CD4-positive, alpha-beta memory T cell (primary cell): ENCODE measurements at regions of chr12 and their contacts with region 1.

Region 1: DNA sequence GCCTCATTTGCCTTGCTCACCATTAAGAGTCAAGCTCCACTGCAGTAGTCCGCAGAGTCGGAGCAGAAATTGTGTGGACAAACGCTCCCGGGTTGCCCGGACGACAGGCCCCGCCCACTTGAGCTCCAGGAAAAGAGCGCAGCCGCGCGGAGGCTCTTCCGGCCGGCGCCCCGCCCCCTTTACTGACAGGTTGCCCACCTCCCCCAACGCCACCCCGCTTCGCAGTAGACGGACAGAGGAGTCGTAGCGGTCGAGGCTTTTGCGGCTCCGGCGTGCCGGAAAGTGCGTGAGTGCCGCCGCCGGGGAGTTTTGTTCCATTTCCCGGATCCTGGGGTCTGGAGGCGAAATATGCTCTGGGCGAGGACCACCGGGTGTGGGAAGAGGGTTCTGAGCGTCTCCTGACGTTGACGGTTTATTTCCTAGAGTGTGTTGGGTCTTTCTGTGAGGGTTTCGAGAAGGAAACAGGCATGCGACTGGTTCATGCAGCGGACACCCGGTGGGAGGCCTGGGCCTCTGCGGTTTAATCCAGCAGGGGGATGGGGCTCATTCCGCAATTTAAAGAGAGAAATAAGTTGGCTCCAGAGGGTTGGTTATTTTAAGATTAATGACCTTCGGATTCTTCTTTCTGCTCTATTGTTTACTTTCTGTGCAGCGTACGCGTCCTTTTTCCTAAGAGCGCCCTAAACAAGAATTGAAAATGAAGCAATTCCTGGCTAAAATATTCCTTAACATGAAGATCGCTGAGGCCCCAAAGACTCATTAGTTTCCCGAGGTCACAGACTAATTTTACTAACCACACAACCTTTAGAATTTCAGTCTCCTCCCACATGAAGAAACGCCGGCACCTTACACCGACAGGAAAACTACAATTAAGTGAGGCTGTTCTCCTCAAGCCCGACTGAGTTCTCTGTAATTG is at the starts of genes DNAI7 and ETFRF1:
- DNase-seq: peak; percentile 93 to 97 (median 95)
- H3K4me3 ChIP-seq: peak within 1 kb of the TSS; percentile 73 to 98
- H3K4me3 Mint-ChIP-seq: peak within 1 kb of the TSS; percentile 96 to 99 (median 99)
- H3K27ac ChIP-seq: peak within 1 kb of the TSS; percentile 83
- H3K27ac Mint-ChIP-seq: peak within 1 kb of the TSS; percentile 97 to 100 (median 99)
- H3K4me1 ChIP-seq: peaks cover 24% of the 10 kb centered on the region
- H3K4me1 Mint-ChIP-seq: peaks cover 16 to 35% (median 25%) of the 10 kb centered on the region in 4 donors
- H3K27me3 ChIP-seq: no peaks in the 10 kb centered on the region
- H3K27me3 Mint-ChIP-seq: no peaks in the 10 kb centered on the region
- total RNA-seq, gene DNAI7: 0.15 TPM in 1 of 2 experiments, not detected in the other
- total RNA-seq, gene ETFRF1: 22.1 to 23.0 TPM

Region 2: DNA sequence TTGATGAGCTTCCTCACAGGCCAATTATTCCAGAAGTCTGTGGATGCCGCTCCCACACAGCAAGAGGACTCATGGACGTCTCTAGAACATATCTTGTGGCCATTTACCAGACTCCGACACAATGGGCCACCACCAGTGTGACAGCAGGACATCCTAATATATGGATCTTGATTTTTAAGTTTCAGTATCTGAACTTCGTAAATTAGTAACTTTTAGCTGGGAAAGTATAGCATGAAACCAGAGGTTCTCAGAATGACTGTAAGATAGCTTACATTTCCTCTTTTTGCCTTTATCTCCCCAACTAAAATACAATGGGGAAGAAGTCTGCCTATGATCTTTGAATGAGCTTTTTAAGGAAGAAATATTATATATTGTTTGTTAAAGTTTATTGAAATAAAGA is 87.4 kb before region 1 on chr12:
- CTCF ChIA-PET with region 1: no interaction called
- POLR2A ChIA-PET with region 1: no interaction called
- intact Hi-C with region 1: no loop called
- DNase-seq: no peak
- H3K4me3 ChIP-seq: no peak overlapping the region
- H3K4me3 Mint-ChIP-seq: no peak overlapping the region
- H3K27ac ChIP-seq: no peak overlapping the region
- H3K27ac Mint-ChIP-seq: peak overlapping the region in 3 of 7 donors; percentile 12 to 67 (median 25)
- H3K4me1 ChIP-seq: no peaks in the 10 kb centered on the region
- H3K4me1 Mint-ChIP-seq: no peaks in the 10 kb centered on the region
- H3K27me3 ChIP-seq: no peaks in the 10 kb centered on the region
- H3K27me3 Mint-ChIP-seq: no peaks in the 10 kb centered on the region

Region 3: DNA sequence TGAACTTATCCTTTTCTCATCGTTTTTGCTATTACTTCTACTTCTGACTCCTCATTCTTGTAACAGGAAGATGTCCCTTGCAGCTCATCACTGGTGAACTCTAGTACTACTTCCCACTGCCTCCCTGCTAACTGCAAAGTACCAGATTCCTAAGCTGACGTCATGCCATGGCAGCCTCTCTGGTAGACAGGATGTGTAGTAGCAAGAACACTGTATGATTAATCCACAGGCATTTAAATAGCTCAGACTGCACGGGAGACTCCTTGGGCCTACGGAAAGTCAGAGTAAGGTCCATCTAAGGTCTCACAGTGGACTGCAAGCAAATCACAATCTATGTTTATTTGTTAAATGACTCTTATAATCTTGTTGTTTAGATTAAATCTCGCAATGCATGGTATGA is 43.8 kb before region 1 on chr12:
- CTCF ChIA-PET with region 1: interaction called, 11 read pairs
- POLR2A ChIA-PET with region 1: interaction called, 7 read pairs
- intact Hi-C with region 1: loop called (anchors 1 kb)
- DNase-seq: no peak
- H3K4me3 ChIP-seq: no peak overlapping the region
- H3K4me3 Mint-ChIP-seq: no peak overlapping the region
- H3K27ac ChIP-seq: no peak overlapping the region
- H3K27ac Mint-ChIP-seq: peak overlapping the region in 1 of 7 donors; percentile 5
- H3K4me1 ChIP-seq: peaks cover 3% of the 10 kb centered on the region
- H3K4me1 Mint-ChIP-seq: peaks cover 0 to 8% (median 6%) of the 10 kb centered on the region in 4 donors
- H3K27me3 ChIP-seq: no peaks in the 10 kb centered on the region
- H3K27me3 Mint-ChIP-seq: no peaks in the 10 kb centered on the region

Region 4: DNA sequence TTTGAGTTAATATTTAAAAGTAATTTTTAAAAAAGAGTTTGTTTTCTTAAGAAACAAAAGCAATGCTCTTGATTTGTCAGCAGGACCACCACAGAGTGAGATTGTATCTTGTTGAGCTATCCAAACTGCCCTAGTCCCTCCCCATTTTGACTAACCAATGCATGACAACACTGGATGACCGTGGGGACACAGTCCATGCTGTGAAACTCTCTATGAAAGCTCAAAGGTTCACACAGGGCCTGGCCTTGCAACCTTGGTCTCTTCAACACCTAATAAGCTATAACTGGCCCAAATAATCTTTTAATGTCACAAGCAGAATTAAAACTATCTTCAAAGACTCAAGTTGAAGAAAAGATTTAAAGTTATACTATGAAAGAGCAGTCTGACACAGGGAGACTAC is 13.2 kb after region 1 on chr12:
- CTCF ChIA-PET with region 1: interaction called, 3 read pairs
- POLR2A ChIA-PET with region 1: interaction called, 9 read pairs
- intact Hi-C with region 1: loop called (anchors 2 kb)
- DNase-seq: no peak
- H3K4me3 ChIP-seq: no peak overlapping the region
- H3K4me3 Mint-ChIP-seq: no peak overlapping the region
- H3K27ac ChIP-seq: no peak overlapping the region
- H3K27ac Mint-ChIP-seq: peak overlapping the region in 3 of 7 donors; percentile 37 to 88 (median 50)
- H3K4me1 ChIP-seq: no peaks in the 10 kb centered on the region
- H3K4me1 Mint-ChIP-seq: peaks cover 0 to 6% (median 4%) of the 10 kb centered on the region in 4 donors
- H3K27me3 ChIP-seq: no peaks in the 10 kb centered on the region
- H3K27me3 Mint-ChIP-seq: no peaks in the 10 kb centered on the region